ENCODE measurements at regions of chr18 and their contacts with region 1.

Region 1: GRCh38 chr18:34787931-34788532 is 77.9 kb downstream of the DTNA start:
- DNase-seq: peak; percentile 27
- H3K4me3 Mint-ChIP-seq: no peak overlapping the region
- H3K27ac Mint-ChIP-seq: no peak overlapping the region
- H3K4me1 Mint-ChIP-seq: no peaks in the 10 kb centered on the region
- H3K27me3 Mint-ChIP-seq: no peaks in the 10 kb centered on the region

Region 2: DNA sequence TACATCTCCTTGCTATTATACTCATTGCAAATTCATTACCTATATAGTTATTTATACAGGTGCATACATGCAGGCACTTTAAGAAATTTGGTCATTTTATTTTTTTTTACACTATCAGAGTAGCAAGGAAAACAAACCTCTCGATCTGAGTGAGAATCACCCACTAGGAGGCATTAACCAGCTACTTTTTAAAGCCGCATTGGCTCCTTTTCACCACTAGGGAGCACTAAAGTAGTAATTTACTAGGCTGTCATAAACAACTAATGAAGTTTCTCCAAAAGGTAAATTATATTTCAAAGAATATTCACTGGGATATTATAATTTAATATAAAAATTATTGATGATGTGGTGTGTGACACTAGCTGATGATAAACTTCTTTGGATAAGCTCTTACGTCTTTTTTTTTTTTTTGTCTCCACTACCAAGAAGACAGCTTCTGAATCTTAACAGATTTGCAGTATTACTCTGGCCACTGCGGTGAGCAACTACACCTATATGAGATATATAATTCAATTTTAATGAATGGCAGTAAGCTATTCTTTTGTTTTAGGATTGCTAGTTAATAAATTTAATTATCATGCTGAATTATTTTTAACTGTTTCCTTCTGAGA is 665.2 kb before region 1 on chr18:
- CTCF ChIA-PET with region 1: interaction called, 10 read pairs
- POLR2A ChIA-PET with region 1: no interaction called
- DNase-seq: no peak
- H3K4me3 Mint-ChIP-seq: no peak overlapping the region
- H3K27ac Mint-ChIP-seq: no peak overlapping the region
- H3K4me1 Mint-ChIP-seq: no peaks in the 10 kb centered on the region
- H3K27me3 Mint-ChIP-seq: no peaks in the 10 kb centered on the region

Region 3: GRCh38 chr18:34661464-34662111 is 126.4 kb before region 1 on chr18:
- CTCF ChIA-PET with region 1: interaction called, 34 read pairs
- POLR2A ChIA-PET with region 1: no interaction called
- DNase-seq: no peak
- H3K4me3 Mint-ChIP-seq: no peak overlapping the region
- H3K27ac Mint-ChIP-seq: no peak overlapping the region
- H3K4me1 Mint-ChIP-seq: no peaks in the 10 kb centered on the region
- H3K27me3 Mint-ChIP-seq: peaks cover 6% of the 10 kb centered on the region

Measured in activated CD4-positive, alpha-beta memory T cell treated with anti-CD3 and anti-CD28 coated beads, Interleukin-2, amount 10 ng/mL, durations not matched to agents 7 days and 5 days (primary cell).